GM10248 (cell line): ENCODE measurements at regions of chr15 and their contacts with region 1.

Region 1: DNA sequence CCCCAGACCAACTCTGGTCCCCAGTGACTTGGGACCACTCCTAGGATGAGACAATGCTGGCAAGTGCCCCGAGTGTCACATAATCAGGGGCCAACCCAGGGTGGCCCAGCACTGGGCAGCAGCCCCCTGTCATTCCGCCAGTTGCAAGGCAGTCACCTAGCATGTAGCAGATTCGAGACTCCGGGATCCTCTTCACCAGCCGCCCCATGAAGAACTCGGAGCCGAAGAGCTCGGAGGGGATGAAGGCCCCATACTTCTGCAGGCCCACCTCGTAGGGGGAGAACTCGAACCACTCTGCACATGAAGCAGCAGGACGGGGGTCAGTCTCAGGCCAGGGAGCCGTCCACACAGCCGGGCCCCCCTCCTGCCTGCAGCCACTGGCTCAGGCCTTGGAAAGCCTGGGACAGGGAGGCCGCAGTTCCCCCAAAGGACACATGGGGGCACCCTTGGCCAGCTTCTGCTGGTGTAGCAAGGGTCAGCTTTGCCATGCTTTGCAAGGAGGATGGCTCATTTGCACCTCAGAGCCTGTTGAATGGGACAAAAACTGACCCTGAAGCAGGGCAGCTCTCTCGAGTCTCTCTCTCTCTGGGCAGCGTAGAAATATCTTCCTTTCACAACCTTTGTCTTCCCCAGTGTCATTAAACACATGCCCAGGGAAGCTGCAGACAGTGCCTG is 17.0 kb upstream of the EHD4 start:
- DNase-seq: peak; percentile 90
- CTCF ChIP-seq: peak; percentile 99

Region 2: DNA sequence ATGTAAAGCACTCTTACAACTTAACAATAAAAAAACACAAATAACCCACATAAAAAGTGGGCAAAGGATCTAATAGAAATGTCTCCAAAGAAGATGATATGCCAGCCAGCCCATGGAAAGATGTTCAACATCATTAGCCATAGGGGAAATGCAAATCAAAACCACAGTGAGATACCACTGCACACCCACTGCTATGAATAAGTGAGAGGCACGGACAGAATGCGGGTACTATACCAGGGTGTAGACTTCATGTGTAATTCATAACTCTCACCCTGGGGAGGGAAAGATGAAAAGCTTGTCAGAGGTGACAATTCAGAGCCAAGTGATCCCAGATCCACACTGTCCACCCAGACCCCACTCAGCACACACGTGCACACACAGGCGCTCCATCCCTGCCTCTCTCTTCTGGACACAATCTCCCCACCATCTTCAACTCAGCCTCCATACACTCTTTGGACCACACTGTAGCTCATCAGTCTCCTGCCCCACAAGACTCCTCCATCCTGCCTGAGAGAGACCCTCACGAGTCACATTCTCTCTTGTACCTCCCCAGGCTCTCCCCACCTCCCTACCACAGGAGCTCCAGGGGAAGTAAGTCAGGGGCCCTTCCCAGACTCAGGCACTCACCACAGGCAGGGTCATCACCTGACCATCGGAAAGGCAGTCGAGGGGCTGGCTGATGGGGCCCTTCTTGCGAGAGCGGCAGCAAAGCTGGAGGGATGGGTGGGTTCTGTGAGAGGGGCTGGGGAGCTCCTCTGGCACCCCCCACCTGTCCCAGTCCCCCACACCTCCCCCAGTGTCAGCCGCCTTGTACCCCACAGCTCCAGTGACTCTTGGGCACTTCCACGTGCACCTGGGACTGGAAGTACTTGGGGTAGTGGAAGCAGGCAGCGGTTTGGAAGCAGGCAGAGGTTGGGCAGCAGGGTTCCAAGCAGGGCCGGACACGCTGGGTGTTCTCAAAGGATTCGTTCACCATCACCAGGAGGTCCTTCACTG is 10.2 kb after region 1 on chr15:
- CTCF ChIA-PET with region 1: interaction called, 46 read pairs
- POLR2A ChIA-PET with region 1: no interaction called
- DNase-seq: no peak
- CTCF ChIP-seq: no peak

Region 3: DNA sequence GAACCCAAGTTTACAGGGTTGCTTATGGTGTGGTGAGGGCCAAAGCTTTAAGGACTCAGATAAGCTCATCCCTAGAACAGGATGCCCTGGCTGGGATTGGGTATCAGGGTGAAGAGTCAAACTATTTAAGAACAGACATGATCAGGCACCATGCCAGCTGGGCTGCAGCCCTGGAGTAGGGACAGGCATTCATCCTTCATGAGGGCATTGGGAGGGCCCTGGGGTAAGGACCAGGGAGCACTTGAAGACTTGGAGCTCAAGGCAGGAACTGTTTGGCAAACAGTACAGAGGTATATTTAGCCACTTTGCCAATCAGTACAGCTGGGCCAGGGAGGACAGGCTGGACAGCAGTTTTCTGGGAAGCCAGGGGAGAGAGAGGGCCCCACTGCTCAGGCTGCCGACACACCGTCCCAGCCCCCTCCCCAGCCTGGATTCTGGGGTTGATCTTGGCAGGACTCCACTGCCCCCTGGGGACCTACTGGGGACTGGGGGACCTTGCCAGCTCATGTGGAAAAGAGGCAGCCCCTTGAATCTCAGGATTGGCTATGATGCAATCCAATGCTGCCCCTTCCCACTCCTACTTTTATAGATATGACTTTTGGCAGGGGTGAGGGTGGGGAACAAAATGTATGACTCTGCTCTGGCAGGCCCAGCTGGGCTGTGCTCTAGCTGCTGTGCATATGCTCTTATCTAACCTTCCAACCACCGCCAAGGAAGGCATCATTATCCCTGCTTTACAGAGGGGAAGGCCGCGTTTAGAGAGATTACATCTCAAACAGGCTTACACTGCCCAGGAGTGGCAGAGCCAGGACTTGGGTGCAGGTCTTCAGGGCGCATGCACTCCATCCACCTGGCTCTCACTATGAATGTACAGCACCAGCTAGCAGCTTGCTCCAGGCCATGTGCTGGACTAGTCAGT is 29.2 kb after region 1 on chr15:
- CTCF ChIA-PET with region 1: interaction called, 22 read pairs
- POLR2A ChIA-PET with region 1: no interaction called
- DNase-seq: no peak
- CTCF ChIP-seq: no peak

Region 4: DNA sequence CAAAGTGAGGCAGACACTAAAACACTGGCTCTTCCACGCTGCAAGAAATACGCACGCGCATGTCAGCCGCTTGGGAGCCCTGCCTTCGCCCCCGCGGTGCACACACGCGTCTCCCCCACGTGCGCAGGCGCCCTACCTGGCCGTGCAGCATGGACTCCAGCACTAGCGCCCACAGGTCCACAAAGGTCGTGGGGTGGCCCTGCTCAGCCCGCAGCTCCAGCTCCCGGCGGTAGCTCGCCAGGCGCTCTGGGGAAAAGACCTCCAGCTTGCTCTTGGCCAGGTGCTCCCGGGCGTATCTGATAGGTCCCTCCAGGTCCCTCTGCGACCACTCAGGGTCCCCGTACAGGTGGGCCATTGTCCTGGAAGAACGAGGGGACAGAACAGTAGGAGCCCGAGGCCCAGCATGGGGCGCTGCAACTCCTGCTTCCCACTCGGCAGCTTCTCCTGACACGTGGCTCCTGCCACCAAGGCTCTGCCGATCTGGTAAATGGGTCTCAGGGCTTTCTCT is 90.1 kb after region 1 on chr15:
- CTCF ChIA-PET with region 1: interaction called, 133 read pairs
- POLR2A ChIA-PET with region 1: no interaction called
- DNase-seq: no peak
- CTCF ChIP-seq: no peak

Region 5: DNA sequence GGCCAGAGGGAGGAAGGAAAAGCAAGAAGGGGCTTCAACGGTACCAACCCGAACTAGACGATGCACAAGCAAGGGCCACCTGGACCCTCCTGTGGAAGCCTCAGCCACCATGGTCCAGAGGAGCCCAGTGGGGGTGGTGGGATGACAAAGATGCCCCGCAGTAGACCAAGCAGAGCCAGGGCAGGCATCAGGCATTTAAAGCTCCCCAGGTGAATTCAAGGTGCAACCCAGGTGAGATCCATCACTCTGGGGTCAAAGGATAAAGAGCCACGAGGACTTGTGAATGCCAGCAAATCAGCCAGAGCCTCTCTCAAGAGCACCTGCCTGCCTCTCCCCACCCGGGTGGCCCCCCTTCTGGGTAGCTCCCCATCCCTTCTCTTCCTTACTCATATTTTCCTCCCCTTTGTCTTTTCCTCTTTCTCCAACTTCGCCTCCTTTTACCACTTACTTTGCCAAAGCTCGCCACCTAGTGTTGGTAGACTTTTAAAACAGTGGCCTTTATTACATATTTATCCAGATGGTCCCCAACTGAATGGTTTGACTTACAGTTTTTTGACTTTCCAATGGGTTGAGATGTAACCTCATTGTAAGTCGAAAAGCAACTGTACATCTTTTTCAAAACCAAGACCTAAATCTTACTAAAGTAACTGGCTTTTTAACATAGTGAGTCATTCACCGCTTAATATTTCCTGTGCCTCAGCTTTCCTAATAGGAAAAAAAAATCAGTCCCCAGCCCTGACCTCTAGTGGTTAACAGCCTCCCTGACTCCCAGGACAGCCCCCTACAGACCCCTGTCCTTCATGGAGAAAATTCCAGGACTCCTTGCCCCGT is 148.2 kb after region 1 on chr15:
- CTCF ChIA-PET with region 1: interaction called, 16 read pairs
- POLR2A ChIA-PET with region 1: no interaction called
- DNase-seq: peak; percentile 67
- CTCF ChIP-seq: peak; percentile 57